ENCODE measurements at regions of chr1 and their contacts with region 1.

Region 1: DNA sequence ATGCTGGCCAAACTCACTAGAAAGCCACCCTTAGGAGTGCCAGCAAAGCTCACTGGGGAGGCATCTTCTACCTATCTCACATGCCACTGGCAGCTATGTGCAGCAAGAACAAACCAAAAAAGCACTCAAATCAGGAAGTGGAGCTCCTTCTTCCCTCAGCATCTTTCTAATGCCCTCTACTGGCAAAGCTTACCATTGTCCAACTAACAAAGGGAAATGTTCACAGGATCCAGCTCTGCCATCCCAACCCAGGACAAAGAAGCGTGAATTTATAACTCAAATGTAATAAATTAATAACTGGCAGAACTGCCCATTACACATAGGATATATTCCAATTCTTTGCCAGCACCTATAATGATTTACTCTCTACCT is 38.9 kb downstream of the LEPR start:
- DNase-seq: no peak
- H3K4me3 ChIP-seq: no peak overlapping the region
- CTCF ChIP-seq: peak; percentile 51

Region 2: GRCh38 chr1:65372557-65372956 is 86.8 kb before region 1 on chr1:
- CTCF ChIA-PET with region 1: no interaction called
- POLR2A ChIA-PET with region 1: no interaction called
- DNase-seq: no peak
- H3K4me3 ChIP-seq: no peak overlapping the region
- CTCF ChIP-seq: no peak

Region 3: GRCh38 chr1:65431111-65431705 is 28.2 kb before region 1 on chr1:
- CTCF ChIA-PET with region 1: interaction called, 27 read pairs
- POLR2A ChIA-PET with region 1: no interaction called
- DNase-seq: no peak
- H3K4me3 ChIP-seq: no peak overlapping the region
- CTCF ChIP-seq: peak; percentile 37

Region 4: GRCh38 chr1:65440915-65441314 is 18.5 kb before region 1 on chr1:
- CTCF ChIA-PET with region 1: interaction called, 15 read pairs
- POLR2A ChIA-PET with region 1: no interaction called
- DNase-seq: no peak
- H3K4me3 ChIP-seq: no peak overlapping the region
- CTCF ChIP-seq: no peak

Region 5: GRCh38 chr1:65449214-65449842 is 10.1 kb before region 1 on chr1:
- CTCF ChIA-PET with region 1: interaction called, 22 read pairs
- POLR2A ChIA-PET with region 1: no interaction called
- DNase-seq: no peak
- H3K4me3 ChIP-seq: no peak overlapping the region
- CTCF ChIP-seq: no peak

Region 6: DNA sequence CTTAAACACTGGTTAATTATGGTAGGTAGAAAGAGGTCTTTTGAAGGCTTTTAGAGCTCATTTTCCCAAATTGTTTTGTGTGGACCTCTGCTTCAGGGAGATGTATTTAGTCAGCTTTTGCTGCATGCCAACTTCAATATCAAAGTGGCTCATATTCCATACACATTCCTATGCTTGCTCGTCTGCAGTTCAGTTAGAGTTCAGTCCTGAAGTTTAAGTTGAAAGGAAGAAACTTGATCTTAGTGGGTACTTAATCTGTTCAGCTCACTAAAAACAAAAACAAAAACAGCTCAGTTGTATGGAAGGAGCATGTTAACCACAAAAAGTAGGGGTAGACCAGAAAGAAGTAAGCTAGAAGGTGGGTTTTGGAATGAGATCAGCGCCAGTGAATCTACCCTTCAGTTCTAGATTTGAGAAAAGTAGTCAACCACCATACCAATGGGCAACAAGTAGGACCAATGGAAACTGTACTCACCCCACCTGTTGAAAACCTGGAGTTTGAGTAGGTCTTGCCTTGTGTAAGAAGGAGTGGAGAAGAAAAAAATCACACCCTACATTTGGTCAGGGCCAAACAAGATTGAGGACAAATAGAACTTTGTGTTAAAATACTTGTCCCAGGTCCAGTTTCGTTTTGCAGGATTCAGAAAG is 19.1 kb after region 1 on chr1:
- CTCF ChIA-PET with region 1: interaction called, 13 read pairs
- POLR2A ChIA-PET with region 1: no interaction called
- DNase-seq: peak; percentile 51
- H3K4me3 ChIP-seq: no peak overlapping the region
- CTCF ChIP-seq: no peak

Region 7: GRCh38 chr1:65497256-65497830 is 38.0 kb after region 1 on chr1:
- CTCF ChIA-PET with region 1: no interaction called
- POLR2A ChIA-PET with region 1: no interaction called
- DNase-seq: no peak
- H3K4me3 ChIP-seq: no peak overlapping the region
- CTCF ChIP-seq: no peak

Region 8: GRCh38 chr1:65525266-65526048 is 66.1 kb after region 1 on chr1:
- CTCF ChIA-PET with region 1: no interaction called
- POLR2A ChIA-PET with region 1: no interaction called
- DNase-seq: no peak
- H3K4me3 ChIP-seq: peak overlapping the region; percentile 61
- CTCF ChIP-seq: no peak